GM13976 (cell line): ENCODE measurements at regions of chr3 and their contacts with region 1.

Region 1: GRCh38 chr3:39096775-39097174 is 10.7 kb downstream of the GORASP1 start:
- DNase-seq: no peak
- CTCF ChIP-seq: no peak

Region 2: DNA sequence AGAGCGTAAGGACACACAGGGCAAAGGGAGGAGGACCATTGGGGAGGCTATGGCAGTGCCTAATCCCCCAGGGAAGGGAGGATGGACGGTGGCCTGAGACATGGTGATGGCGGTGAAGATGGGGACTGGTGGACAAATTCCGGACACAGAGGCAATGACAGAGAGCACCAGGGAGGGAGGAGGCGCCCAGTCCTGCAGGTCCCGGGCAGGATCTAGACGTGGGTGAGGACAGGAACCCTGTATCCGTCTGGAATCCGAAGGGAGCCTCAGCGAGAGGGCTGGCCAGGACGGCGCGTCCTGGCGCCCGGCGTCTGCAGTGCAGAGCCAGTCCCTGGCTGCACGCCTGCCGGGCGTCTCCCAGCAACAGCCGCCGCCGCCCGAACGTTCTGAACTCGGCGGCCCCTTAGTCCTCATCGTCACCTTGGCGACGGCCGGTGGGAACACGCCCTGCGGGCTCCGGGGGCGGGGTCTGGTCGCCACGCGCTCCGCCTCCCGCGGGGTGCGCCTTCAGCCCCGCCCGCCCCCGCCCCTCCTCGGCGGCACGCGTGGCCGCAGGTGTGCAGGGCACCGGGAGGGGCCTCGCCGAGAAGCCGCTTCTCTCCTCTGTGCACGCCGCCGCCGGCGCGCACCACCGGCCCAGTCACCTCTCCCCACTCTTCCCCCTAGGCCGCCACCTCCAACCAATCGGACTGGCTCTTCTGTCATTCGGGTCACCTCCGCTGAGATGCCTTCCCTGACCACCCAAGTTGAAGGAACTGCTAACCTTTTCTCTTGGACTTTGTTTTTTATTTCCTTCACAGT is 84.0 kb after region 1 on chr3:
- in situ Hi-C with region 1: loop called (anchors 10 kb)
- DNase-seq: peak; percentile 97
- CTCF ChIP-seq: no peak

Region 3: DNA sequence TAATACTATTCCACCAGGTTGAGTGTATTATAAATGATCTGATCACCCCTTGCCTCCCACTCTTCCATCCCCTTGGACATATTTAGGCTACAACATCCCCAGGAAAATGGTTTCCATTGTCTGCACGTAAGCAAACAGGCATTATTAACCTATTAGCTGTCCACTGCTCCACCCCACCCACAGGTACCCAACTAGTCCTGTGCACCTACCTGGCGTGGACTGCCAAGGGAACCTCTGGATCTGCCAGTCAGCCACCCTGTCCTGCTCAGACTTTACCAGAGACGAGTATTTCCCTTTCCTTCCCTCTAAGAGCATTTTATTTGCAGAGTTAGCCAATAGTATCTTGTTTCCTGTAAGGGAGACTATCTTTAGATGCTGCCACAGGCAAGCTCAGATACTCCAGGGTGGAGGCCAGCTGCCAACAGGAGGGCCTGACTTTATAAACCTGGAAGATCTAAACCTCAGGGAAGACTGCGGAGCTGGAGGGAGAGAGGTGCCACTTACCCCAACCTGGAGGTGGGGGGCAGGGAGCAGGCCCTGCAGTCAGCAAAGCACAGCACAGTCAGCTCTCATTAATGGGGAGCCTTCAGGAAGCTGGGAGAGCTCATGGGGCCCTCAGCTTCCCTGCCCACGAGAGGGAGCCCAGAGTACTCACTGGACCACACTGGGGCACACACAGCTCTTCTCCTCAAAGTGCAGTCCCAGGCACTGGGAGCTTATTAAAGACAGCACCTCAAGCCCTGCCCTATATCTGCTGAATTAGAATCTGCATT is 183.2 kb after region 1 on chr3 and contains the start of gene CX3CR1:
- in situ Hi-C with region 1: loop called (anchors 10 kb)
- DNase-seq: no peak
- CTCF ChIP-seq: no peak